CD4-positive, alpha-beta memory T cell (primary cell): ENCODE measurements at regions of chr1 and their contacts with region 1.

Region 1: DNA sequence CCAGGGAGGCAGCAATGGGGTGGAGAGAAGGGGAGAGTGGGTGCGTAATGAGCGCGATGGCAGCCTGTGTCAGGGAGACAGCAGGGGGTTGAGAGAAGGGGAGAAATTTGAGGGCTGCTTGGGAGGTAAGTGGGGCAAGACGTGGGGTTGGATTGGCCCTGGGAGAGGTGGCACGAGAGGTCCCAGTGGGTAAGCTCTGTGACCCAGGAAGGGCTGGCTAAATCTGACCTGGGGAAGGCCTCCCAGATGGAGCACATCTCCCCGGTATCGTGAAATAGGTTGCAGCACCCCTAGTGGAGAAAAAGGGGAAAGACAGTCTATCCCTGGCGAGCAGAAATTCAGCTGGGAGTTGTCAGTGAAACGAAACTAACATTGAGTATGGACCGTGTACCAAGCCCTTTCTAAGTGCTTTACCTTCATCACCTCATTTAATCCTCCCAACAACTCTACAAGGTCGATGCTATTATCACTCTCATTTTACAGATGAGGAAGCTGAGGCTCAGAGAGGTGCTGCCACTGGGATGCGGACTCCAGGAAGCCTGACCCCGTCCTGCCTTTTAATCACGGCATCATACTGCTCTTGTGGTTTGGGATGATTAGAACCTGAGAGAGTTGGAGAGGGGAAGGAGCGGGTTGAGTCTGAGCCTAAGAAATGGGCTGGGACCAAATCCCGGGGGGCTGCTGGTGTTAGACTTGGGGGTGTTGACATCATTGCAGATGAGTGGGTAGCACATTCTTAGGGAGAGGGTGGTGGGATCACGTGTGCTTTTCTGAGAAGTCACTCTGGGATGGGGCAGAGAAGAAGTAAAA is 56.6 kb upstream of the RPL11 start:
- DNase-seq: peak; percentile 70 to 79 (median 76)
- H3K4me3 ChIP-seq: peak overlapping the region; percentile 36 to 44
- H3K4me3 Mint-ChIP-seq: peak overlapping the region; percentile 72 to 84 (median 78)
- H3K27ac ChIP-seq: peak overlapping the region; percentile 48
- H3K27ac Mint-ChIP-seq: peak overlapping the region; percentile 71 to 97 (median 90)
- H3K4me1 ChIP-seq: peaks cover 19% of the 10 kb centered on the region
- H3K4me1 Mint-ChIP-seq: peaks cover 21 to 41% (median 26%) of the 10 kb centered on the region in 4 donors
- H3K27me3 ChIP-seq: no peaks in the 10 kb centered on the region
- H3K27me3 Mint-ChIP-seq: no peaks in the 10 kb centered on the region

Region 2: GRCh38 chr1:23322770-23323169 is 312.3 kb before region 1 on chr1:
- CTCF ChIA-PET with region 1: no interaction called
- POLR2A ChIA-PET with region 1: no interaction called
- intact Hi-C with region 1: no loop called
- DNase-seq: no peak
- H3K4me3 ChIP-seq: no peak overlapping the region
- H3K4me3 Mint-ChIP-seq: no peak overlapping the region
- H3K27ac ChIP-seq: no peak overlapping the region
- H3K27ac Mint-ChIP-seq: peak overlapping the region in 5 of 7 donors; percentile 13 to 77 (median 65)
- H3K4me1 ChIP-seq: no peaks in the 10 kb centered on the region
- H3K4me1 Mint-ChIP-seq: peaks cover 19 to 31% (median 25%) of the 10 kb centered on the region in 4 donors
- H3K27me3 ChIP-seq: no peaks in the 10 kb centered on the region
- H3K27me3 Mint-ChIP-seq: no peaks in the 10 kb centered on the region

Region 3: GRCh38 chr1:23496490-23497181 is 138.4 kb before region 1 on chr1:
- CTCF ChIA-PET with region 1: interaction called, 132 read pairs
- POLR2A ChIA-PET with region 1: interaction called, 8 read pairs
- intact Hi-C with region 1: loop called (anchors 1 kb)
- DNase-seq: no peak
- H3K4me3 ChIP-seq: no peak overlapping the region
- H3K4me3 Mint-ChIP-seq: no peak overlapping the region
- H3K27ac ChIP-seq: no peak overlapping the region
- H3K27ac Mint-ChIP-seq: no peak overlapping the region
- H3K4me1 ChIP-seq: peaks cover 4% of the 10 kb centered on the region
- H3K4me1 Mint-ChIP-seq: peaks cover 0 to 9% (median 5%) of the 10 kb centered on the region in 4 donors
- H3K27me3 ChIP-seq: no peaks in the 10 kb centered on the region
- H3K27me3 Mint-ChIP-seq: no peaks in the 10 kb centered on the region

Region 4: DNA sequence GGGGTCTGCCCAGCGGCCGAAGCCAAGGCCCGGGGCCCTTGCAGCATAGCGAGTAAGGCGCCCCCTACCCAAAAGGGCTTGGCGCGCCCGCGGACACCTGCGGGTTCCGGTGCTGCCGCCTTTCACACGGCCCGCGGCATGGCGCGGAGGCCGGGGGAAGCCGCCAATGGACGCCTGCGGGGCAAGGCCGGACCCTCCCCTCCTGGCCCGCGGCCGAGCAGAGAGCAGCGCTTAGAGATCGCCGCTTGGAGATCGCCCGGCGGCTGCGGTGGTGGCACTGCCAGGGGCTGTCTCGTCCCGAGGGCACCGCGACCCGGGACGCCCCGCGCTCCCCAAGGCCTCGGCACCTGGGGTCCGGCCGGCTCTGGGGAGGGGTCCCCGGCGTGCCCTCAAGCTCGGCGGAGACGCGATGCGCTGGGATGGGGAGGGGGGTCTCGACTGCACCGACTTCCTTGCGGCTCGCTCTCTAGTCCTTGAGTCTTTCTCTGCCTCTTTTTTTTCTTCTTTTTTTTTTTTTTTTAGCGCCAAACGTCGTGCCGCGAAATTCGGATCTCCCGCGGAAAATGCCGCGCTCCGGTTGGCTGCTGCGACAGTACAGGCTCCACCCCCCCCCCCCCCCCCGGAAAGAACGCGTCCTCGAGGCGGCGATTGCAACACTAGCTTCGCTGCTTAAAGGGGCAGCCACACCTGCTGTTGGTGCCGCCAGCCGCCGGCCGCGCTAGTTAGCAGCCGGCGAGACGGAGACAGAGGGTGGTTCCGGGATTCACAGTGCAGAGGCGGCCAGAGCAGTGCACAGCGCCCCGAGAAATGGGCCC is 104.1 kb before region 1 on chr1 and contains the start of gene E2F2:
- CTCF ChIA-PET with region 1: interaction called, 19 read pairs
- POLR2A ChIA-PET with region 1: interaction called, 12 read pairs
- intact Hi-C with region 1: no loop called
- DNase-seq: peak; percentile 78 to 86 (median 82)
- H3K4me3 ChIP-seq: peak within 1 kb of the TSS; percentile 40 to 64
- H3K4me3 Mint-ChIP-seq: peak within 1 kb of the TSS; percentile 90 to 96 (median 92)
- H3K27ac ChIP-seq: peak within 1 kb of the TSS; percentile 60
- H3K27ac Mint-ChIP-seq: peak within 1 kb of the TSS; percentile 86 to 97 (median 94)
- H3K4me1 ChIP-seq: peaks cover 82% of the 10 kb centered on the region
- H3K4me1 Mint-ChIP-seq: peaks cover 58 to 90% (median 80%) of the 10 kb centered on the region in 4 donors
- H3K27me3 ChIP-seq: no peaks in the 10 kb centered on the region
- H3K27me3 Mint-ChIP-seq: no peaks in the 10 kb centered on the region
- total RNA-seq, gene E2F2: 1.1 to 1.2 TPM

Region 5: GRCh38 chr1:23577056-23578004 is 57.7 kb before region 1 on chr1:
- CTCF ChIA-PET with region 1: interaction called, 29 read pairs
- POLR2A ChIA-PET with region 1: interaction called, 6 read pairs
- intact Hi-C with region 1: no loop called
- DNase-seq: no peak
- H3K4me3 ChIP-seq: no peak overlapping the region
- H3K4me3 Mint-ChIP-seq: peak overlapping the region in 3 of 8 donors; percentile 36 to 46 (median 38)
- H3K27ac ChIP-seq: no peak overlapping the region
- H3K27ac Mint-ChIP-seq: peak overlapping the region; percentile 4 to 86 (median 54)
- H3K4me1 ChIP-seq: peaks cover 25% of the 10 kb centered on the region
- H3K4me1 Mint-ChIP-seq: peaks cover 13 to 27% (median 20%) of the 10 kb centered on the region in 4 donors
- H3K27me3 ChIP-seq: no peaks in the 10 kb centered on the region
- H3K27me3 Mint-ChIP-seq: no peaks in the 10 kb centered on the region

Region 6: DNA sequence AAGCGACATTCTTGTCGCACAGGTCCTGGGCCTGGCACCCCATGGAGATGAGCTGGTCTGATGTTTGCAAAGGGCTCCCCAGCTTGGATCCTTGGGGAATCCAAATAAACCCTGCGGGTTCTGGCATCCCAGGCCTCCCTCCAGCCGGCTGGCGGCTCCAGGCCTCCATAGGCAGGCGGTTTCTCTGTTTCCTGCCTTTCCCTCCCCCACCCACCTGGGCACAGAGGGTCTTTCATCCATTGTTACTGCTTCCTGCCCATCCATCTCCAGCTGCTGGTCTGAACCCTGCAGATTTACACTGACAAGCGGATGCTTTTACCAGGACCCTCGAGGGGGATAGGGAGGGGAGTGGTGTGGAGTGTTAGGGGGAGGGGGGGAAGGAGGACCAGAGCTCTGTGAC is 36.6 kb before region 1 on chr1:
- CTCF ChIA-PET with region 1: interaction called, 111 read pairs
- POLR2A ChIA-PET with region 1: interaction called, 28 read pairs
- intact Hi-C with region 1: loop called (anchors 1 kb)
- DNase-seq: no peak
- H3K4me3 ChIP-seq: no peak overlapping the region
- H3K4me3 Mint-ChIP-seq: no peak overlapping the region
- H3K27ac ChIP-seq: no peak overlapping the region
- H3K27ac Mint-ChIP-seq: peak overlapping the region in 3 of 7 donors; percentile 25 to 88 (median 40)
- H3K4me1 ChIP-seq: peaks cover 90% of the 10 kb centered on the region
- H3K4me1 Mint-ChIP-seq: peaks cover 48 to 95% (median 80%) of the 10 kb centered on the region in 4 donors
- H3K27me3 ChIP-seq: no peaks in the 10 kb centered on the region
- H3K27me3 Mint-ChIP-seq: no peaks in the 10 kb centered on the region

Region 7: GRCh38 chr1:23619299-23620188 is 15.5 kb before region 1 on chr1:
- CTCF ChIA-PET with region 1: interaction called, 130 read pairs
- POLR2A ChIA-PET with region 1: interaction called, 154 read pairs
- intact Hi-C with region 1: loop called (anchors 1 kb)
- DNase-seq: peak; percentile 87 to 94 (median 90)
- H3K4me3 ChIP-seq: peak overlapping the region; percentile 47 to 58
- H3K4me3 Mint-ChIP-seq: peak overlapping the region; percentile 81 to 88 (median 84)
- H3K27ac ChIP-seq: peak overlapping the region; percentile 65
- H3K27ac Mint-ChIP-seq: peak overlapping the region; percentile 92 to 98 (median 95)
- H3K4me1 ChIP-seq: peaks cover 88% of the 10 kb centered on the region
- H3K4me1 Mint-ChIP-seq: peaks cover 62 to 95% (median 77%) of the 10 kb centered on the region in 4 donors
- H3K27me3 ChIP-seq: no peaks in the 10 kb centered on the region
- H3K27me3 Mint-ChIP-seq: no peaks in the 10 kb centered on the region

Region 8: DNA sequence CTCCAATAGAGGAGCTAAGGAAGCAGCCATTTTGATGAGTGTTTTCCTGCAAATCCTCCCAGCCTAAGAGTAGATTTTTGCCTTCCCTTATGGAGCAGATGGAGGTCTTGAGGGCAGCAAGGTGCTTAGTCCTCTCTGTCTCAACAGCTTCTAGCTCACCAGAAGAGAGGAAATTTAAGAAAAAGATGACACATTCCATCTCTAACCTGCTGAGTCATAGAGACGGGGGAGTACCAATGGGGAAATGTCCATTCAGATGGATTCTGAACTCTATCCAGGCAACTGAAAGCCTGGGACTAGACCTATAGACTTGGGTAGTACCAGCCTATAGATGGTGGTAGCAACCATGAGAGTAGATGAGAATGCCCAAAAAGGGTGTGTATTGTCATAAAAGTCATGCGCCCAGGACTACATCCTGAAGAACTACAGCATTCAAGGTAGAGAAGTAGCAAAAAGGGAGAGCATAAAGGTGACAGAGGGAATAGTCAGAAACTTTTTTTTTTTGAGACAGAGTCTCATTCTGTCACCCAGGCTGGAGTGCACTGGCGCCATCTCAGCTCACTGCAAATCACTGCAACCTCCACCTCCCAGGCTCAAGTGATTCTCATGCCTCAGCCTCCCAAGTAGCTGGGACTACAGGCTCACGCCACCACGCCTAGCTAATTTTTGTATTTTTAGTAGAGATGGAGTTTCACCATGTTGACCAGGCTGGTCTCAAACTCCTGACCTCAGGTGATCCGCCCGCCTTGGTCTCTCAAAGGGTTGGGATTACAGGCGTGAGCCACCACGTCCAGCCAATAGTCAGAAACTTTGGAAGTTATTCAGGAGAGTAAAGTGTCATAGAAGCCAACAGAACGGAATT is 97.5 kb after region 1 on chr1:
- CTCF ChIA-PET with region 1: no interaction called
- POLR2A ChIA-PET with region 1: no interaction called
- intact Hi-C with region 1: no loop called
- DNase-seq: no peak
- H3K4me3 ChIP-seq: no peak overlapping the region
- H3K4me3 Mint-ChIP-seq: no peak overlapping the region
- H3K27ac ChIP-seq: no peak overlapping the region
- H3K27ac Mint-ChIP-seq: no peak overlapping the region
- H3K4me1 ChIP-seq: no peaks in the 10 kb centered on the region
- H3K4me1 Mint-ChIP-seq: peaks cover 0 to 3% (median 0%) of the 10 kb centered on the region in 4 donors
- H3K27me3 ChIP-seq: no peaks in the 10 kb centered on the region
- H3K27me3 Mint-ChIP-seq: no peaks in the 10 kb centered on the region